A673 (cell line): ENCODE measurements at regions of chr2 and their contacts with region 1.

Region 1: DNA sequence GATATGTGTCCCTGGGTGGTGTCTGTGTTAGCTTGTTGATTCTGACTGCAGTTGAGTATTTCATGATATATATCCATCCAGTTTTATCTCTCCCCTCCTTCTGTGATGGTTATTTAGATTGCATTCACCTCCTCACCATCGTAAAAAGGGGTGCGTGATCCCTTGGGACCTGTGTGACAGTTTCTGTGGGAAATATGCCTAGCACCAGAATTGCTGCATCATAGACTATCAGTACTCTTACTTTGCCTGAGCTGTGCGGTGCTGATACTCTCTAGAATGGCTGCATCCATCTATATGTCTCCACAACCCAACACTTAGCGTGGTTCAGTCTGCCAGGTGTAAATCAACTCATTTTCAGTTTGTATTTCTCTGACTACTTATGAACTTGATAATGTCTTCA is 34.3 kb downstream of the PKP4 start:
- DNase-seq: no peak
- H3K4me3 ChIP-seq: no peak overlapping the region
- H3K27ac ChIP-seq: no peak overlapping the region
- H3K4me1 ChIP-seq: peaks cover 61% of the 10 kb centered on the region
- H3K27me3 ChIP-seq: no peaks in the 10 kb centered on the region
- CTCF ChIP-seq: no peak

Region 2: DNA sequence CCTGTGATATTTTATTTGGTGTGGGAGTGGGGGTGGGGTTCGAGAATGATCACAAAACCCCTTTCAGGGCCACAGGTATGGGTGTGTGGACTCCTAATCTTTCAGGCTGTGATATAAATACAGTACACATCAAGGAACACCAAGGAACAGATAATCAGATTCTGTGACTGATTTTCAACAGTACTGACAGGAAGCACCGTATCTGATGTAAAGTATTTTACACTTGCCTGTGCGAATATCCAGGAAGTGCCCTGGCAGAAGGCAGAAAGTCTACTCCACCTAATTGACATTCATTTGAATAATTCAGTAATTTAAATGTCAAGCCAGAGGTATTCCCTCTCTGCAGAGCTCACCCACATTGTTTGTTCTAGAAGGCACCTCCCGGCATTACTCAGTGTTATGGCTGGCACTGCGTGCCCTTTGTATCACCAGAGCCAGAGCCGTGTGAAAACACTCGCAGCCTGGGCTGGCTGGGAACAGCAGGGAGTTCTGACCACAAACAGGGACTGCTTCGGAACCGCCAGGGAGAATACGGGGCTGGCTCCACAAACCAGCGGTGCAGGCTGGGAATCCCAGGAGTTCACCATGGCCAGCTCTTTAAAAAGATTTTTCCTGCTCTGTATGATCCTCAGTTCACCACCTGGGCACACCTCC is 706.8 kb before region 1 on chr2:
- CTCF ChIA-PET with region 1: no interaction called
- POLR2A ChIA-PET with region 1: no interaction called
- intact Hi-C with region 1: no loop called
- DNase-seq: peak; percentile 68
- H3K4me3 ChIP-seq: peak overlapping the region; percentile 1
- H3K27ac ChIP-seq: peak overlapping the region; percentile 5
- H3K4me1 ChIP-seq: peaks cover 42% of the 10 kb centered on the region
- H3K27me3 ChIP-seq: no peaks in the 10 kb centered on the region
- CTCF ChIP-seq: no peak

Region 3: DNA sequence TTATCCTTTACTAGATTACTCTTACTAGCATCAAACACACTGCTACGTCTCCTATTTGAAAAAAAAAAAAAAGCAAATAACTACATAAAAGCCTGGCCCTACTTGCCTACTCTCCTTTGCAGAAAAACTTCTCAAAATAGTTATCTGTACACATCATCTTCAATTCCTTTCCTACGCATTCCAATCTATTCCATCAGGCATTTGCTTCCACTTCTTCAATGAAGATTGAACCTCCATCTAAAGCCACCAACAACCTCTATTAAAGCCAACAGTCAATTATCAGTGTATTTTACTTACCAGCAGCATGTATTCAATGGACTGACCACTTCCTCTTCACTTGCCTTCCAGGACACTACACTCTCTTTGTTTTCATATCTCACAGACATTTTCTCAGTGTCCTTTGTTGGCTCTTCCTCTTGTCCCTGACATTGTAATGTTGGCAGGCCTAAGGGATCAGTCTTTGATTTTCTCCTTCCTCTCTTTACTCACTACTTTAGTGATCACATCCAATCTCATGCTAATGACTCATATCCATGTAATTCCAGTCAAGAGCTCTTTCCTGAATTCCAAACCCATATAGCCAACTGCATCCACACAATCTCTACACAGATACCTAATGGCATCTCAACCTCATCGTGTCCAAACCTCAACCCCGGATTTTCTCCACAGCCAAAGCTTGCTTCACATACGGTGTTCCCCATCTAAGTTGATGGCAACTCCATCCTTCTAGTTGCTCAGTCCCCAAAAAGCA is 165.9 kb before region 1 on chr2:
- CTCF ChIA-PET with region 1: no interaction called
- POLR2A ChIA-PET with region 1: no interaction called
- intact Hi-C with region 1: no loop called
- DNase-seq: no peak
- H3K4me3 ChIP-seq: no peak overlapping the region
- H3K27ac ChIP-seq: no peak overlapping the region
- H3K4me1 ChIP-seq: no peaks in the 10 kb centered on the region
- H3K27me3 ChIP-seq: no peaks in the 10 kb centered on the region
- CTCF ChIP-seq: no peak

Region 4: GRCh38 chr2:160337728-160338127 is 1846.7 kb after region 1 on chr2:
- CTCF ChIA-PET with region 1: interaction called, 11 read pairs
- POLR2A ChIA-PET with region 1: no interaction called
- intact Hi-C with region 1: no loop called
- DNase-seq: no peak
- H3K4me3 ChIP-seq: no peak overlapping the region
- H3K27ac ChIP-seq: no peak overlapping the region
- H3K4me1 ChIP-seq: peaks cover 53% of the 10 kb centered on the region
- H3K27me3 ChIP-seq: no peaks in the 10 kb centered on the region
- CTCF ChIP-seq: no peak